Right ventricle myocardium inferior (tissue), 1 donor: ENCODE measurements at regions of chr15 and their contacts with region 1.

Region 1: GRCh38 chr15:68550481-68551295 is 28.1 kb upstream of the CORO2B start:
- DNase-seq: peak; percentile 78
- ATAC-seq: no peak

Region 2: GRCh38 chr15:68924866-68925560 is 374.3 kb after region 1 on chr15:
- intact Hi-C with region 1: loop called (anchors 5 kb)
- DNase-seq: no peak
- ATAC-seq: peak; percentile 86